ENCODE measurements at regions of chr6 and their contacts with region 1.

Region 1: DNA sequence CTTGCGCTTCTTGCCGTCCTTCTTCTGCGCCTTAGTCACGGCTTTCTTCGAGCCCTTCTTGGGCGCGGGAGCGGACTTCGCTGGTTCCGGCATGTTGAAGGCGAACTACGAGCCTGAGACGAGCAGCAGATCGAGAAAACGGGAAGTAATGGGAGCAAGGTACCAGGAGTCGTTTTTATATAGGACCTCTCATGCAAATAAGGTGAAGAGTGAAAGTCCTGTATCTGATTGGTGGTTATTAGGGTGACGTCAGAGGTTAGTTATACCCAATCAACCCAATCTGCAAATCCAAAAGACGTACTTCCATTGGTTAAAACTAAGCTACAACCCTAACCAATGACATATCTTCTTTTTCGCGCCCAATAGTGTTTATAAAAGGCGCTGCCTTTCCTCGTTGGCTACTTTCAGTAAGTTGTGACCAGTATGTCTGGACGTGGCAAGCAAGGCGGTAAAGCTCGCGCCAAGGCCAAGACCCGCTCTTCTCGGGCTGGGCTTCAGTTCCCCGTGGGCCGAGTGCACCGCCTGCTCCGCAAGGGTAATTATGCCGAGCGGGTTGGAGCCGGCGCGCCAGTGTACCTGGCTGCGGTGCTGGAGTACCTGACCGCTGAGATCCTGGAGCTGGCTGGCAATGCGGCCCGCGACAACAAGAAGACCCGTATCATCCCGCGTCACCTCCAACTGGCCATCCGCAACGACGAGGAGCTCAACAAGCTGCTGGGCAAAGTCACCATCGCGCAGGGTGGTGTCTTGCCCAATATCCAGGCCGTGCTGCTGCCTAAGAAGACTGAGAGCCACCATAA is 100.6 kb upstream of the PRSS16 start:
- DNase-seq: peak; percentile 89 to 93
- H3K4me3 ChIP-seq: peak overlapping the region; percentile 69
- H3K4me3 Mint-ChIP-seq: no peak overlapping the region
- H3K27ac Mint-ChIP-seq: no peak overlapping the region
- H3K4me1 ChIP-seq: no peaks in the 10 kb centered on the region
- H3K4me1 Mint-ChIP-seq: peaks cover 8% of the 10 kb centered on the region
- H3K27me3 ChIP-seq: no peaks in the 10 kb centered on the region
- H3K27me3 Mint-ChIP-seq: no peaks in the 10 kb centered on the region
- CTCF ChIP-seq: no peak

Region 2: DNA sequence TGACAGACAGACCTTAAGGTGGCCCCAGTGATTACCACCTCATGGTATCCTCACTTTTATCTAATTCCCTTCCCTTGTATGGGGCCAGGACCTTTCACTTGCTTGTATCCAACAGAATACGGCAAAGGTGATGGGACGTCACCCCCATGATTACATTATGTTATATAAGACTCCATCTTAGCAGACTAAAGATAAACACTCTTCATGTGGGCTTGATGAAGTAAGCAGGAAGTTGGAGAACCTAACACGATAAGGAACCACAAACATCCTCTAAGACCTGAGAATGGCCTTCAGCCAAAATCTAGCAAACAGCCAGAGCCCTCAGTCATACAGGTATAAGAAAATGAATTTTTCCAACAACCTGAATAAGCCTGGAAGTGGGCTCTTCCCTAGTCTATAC is 1280.9 kb before region 1 on chr6:
- CTCF ChIA-PET with region 1: no interaction called
- POLR2A ChIA-PET with region 1: interaction called, 10 read pairs
- intact Hi-C with region 1: no loop called
- DNase-seq: no peak
- H3K4me3 ChIP-seq: no peak overlapping the region
- H3K4me3 Mint-ChIP-seq: no peak overlapping the region
- H3K27ac Mint-ChIP-seq: no peak overlapping the region
- H3K4me1 ChIP-seq: no peaks in the 10 kb centered on the region
- H3K4me1 Mint-ChIP-seq: no peaks in the 10 kb centered on the region
- H3K27me3 ChIP-seq: no peaks in the 10 kb centered on the region; the same call in 1 of the 2 replicates
- H3K27me3 Mint-ChIP-seq: peaks cover 12% of the 10 kb centered on the region
- CTCF ChIP-seq: no peak

Region 3: GRCh38 chr6:26270903-26271667 is 875.8 kb before region 1 on chr6:
- CTCF ChIA-PET with region 1: no interaction called
- POLR2A ChIA-PET with region 1: interaction called, 3 read pairs
- intact Hi-C with region 1: loop called (anchors 5 kb)
- DNase-seq: peak; percentile 86 to 88
- H3K4me3 ChIP-seq: peak overlapping the region; percentile 50
- H3K4me3 Mint-ChIP-seq: no peak overlapping the region
- H3K27ac Mint-ChIP-seq: no peak overlapping the region
- H3K4me1 ChIP-seq: peaks cover 19% of the 10 kb centered on the region
- H3K4me1 Mint-ChIP-seq: peaks cover 19% of the 10 kb centered on the region
- H3K27me3 ChIP-seq: no peaks in the 10 kb centered on the region
- H3K27me3 Mint-ChIP-seq: no peaks in the 10 kb centered on the region
- CTCF ChIP-seq: no peak

Region 4: GRCh38 chr6:27132532-27133280 is 14.2 kb before region 1 on chr6:
- CTCF ChIA-PET with region 1: interaction called, 4 read pairs
- POLR2A ChIA-PET with region 1: interaction called, 221 read pairs
- intact Hi-C with region 1: loop called (anchors 1 kb)
- DNase-seq: peak; percentile 95 to 96
- H3K4me3 ChIP-seq: peak overlapping the region; percentile 70
- H3K4me3 Mint-ChIP-seq: no peak overlapping the region
- H3K27ac Mint-ChIP-seq: no peak overlapping the region
- H3K4me1 ChIP-seq: peaks cover 25% of the 10 kb centered on the region
- H3K4me1 Mint-ChIP-seq: peaks cover 6% of the 10 kb centered on the region
- H3K27me3 ChIP-seq: no peaks in the 10 kb centered on the region
- H3K27me3 Mint-ChIP-seq: no peaks in the 10 kb centered on the region
- CTCF ChIP-seq: no peak

Region 5: DNA sequence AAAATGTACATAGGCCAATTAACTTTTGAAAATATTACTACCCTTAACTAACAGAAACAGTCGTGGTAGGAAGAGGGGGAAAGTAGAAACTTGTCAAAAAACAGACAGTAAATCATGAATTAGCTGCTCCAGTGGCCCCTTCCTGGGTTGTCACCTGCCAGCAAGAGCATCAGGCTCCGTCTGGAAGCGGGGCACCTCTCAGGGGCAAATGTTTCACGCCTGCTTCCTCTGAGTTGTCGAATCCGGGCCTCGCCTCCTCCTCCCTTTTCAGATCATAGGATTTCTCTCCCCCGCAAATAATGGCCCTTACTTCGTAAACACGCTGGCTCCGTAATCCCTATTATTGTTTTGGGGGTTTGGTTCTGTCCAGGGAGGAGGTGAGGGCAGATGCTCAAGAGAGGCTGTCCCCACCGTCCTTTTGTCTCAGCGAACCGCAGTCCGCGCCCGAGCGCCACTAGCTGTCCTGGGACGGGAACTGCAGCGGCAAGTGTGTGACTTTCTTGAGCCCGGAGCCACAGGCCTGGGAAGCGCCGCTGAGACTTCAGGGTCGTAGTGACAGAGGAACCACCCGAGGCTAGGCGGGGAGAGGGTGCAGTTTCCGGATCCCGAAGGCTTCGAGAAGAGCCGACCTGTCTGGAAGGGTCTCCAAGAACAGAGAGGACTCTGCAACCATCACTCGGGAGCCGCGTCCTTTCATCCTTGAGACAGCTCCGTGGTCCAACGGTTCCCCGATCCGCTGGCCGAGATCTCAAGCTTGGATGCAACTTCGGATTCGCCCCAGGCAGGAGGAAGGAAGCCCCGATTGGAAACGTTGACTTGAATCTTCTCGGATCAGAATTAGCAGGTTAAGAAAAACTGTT is 540.5 kb after region 1 on chr6:
- CTCF ChIA-PET with region 1: no interaction called
- POLR2A ChIA-PET with region 1: no interaction called
- intact Hi-C with region 1: no loop called
- DNase-seq: peak; percentile 85 to 87
- H3K4me3 ChIP-seq: peak overlapping the region; percentile 51
- H3K4me3 Mint-ChIP-seq: peak overlapping the region; percentile 78
- H3K27ac Mint-ChIP-seq: peak overlapping the region; percentile 60
- H3K4me1 ChIP-seq: no peaks in the 10 kb centered on the region
- H3K4me1 Mint-ChIP-seq: peaks cover 8% of the 10 kb centered on the region
- H3K27me3 ChIP-seq: no peaks in the 10 kb centered on the region
- H3K27me3 Mint-ChIP-seq: no peaks in the 10 kb centered on the region
- CTCF ChIP-seq: peak; percentile 63 to 81

Region 6: GRCh38 chr6:27809939-27810767 is 663.2 kb after region 1 on chr6:
- CTCF ChIA-PET with region 1: interaction called, 3 read pairs
- POLR2A ChIA-PET with region 1: interaction called, 57 read pairs
- intact Hi-C with region 1: loop called (anchors 1 kb)
- DNase-seq: peak; percentile 87 to 91
- H3K4me3 ChIP-seq: peak overlapping the region; percentile 78
- H3K4me3 Mint-ChIP-seq: peak overlapping the region; percentile 87
- H3K27ac Mint-ChIP-seq: peak overlapping the region; percentile 97
- H3K4me1 ChIP-seq: peaks cover 28% of the 10 kb centered on the region
- H3K4me1 Mint-ChIP-seq: peaks cover 32% of the 10 kb centered on the region
- H3K27me3 ChIP-seq: no peaks in the 10 kb centered on the region
- H3K27me3 Mint-ChIP-seq: no peaks in the 10 kb centered on the region
- CTCF ChIP-seq: no peak

Region 7: DNA sequence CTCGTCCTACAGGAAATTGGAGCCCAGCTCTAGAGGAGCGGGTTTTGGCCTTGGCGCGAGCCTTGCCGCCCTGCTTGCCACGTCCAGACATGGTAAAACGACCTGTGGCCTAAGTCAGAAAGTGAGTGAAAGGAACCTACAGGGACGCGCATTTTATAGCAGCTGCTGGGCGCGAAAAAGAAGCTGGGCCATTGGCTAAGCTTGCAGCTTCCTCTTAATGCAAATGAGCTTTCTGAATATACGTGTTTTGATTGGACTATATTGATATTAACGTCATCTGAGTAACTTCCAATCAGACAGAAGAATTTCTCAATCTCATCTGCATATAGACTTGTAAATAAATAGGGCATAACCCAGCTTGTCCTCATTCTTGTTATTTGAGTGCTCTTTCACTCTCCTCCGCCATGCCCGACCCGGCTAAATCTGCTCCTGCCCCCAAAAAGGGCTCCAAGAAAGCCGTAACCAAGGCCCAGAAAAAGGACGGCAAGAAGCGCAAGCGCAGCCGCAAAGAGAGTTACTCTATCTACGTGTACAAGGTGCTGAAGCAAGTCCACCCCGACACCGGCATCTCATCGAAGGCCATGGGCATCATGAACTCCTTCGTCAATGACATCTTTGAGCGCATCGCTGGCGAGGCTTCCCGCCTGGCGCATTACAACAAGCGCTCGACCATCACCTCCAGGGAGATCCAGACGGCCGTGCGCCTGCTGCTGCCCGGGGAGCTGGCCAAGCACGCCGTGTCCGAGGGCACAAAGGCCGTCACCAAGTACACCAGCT is 746.3 kb after region 1 on chr6:
- CTCF ChIA-PET with region 1: no interaction called
- POLR2A ChIA-PET with region 1: interaction called, 44 read pairs
- intact Hi-C with region 1: loop called (anchors 2 kb)
- DNase-seq: peak; percentile 95 to 96
- H3K4me3 ChIP-seq: peak overlapping the region; percentile 82
- H3K4me3 Mint-ChIP-seq: no peak overlapping the region
- H3K27ac Mint-ChIP-seq: no peak overlapping the region
- H3K4me1 ChIP-seq: peaks cover 21% of the 10 kb centered on the region
- H3K4me1 Mint-ChIP-seq: peaks cover 39% of the 10 kb centered on the region
- H3K27me3 ChIP-seq: no peaks in the 10 kb centered on the region
- H3K27me3 Mint-ChIP-seq: peaks cover 10% of the 10 kb centered on the region
- CTCF ChIP-seq: no peak